Breast epithelium (tissue), 4 donors: ENCODE measurements at regions of chr14 and their contacts with region 1.

Region 1: GRCh38 chr14:22887990-22888378 is 5.0 kb downstream of the REM2 start:
- DNase-seq: no peak
- H3K4me3 ChIP-seq: peak overlapping the region in 2 of 3 donors; percentile 69 to 74
- H3K27ac ChIP-seq: peak overlapping the region; percentile 89 to 91
- H3K4me1 ChIP-seq: peaks cover 0 to 6% of the 10 kb centered on the region in 2 donors
- H3K27me3 ChIP-seq: no peaks in the 10 kb centered on the region
- CTCF ChIP-seq: no peak
- POLR2A ChIP-seq: no peak

Region 2: GRCh38 chr14:22872033-22872832 is 15.8 kb before region 1 on chr14:
- intact Hi-C with region 1: loop called (anchors 1 kb)
- DNase-seq: peak; percentile 86 to 88
- H3K4me3 ChIP-seq: peak overlapping the region; percentile 78 to 99 (median 95)
- H3K27ac ChIP-seq: peak overlapping the region; percentile 96 to 99
- H3K4me1 ChIP-seq: peaks cover 0 to 9% of the 10 kb centered on the region in 2 donors
- H3K27me3 ChIP-seq: no peaks in the 10 kb centered on the region
- CTCF ChIP-seq: peak; percentile 80 to 98 (median 91)
- POLR2A ChIP-seq: no peak